ENCODE measurements at regions of chr6 and their contacts with region 1.

Region 1: DNA sequence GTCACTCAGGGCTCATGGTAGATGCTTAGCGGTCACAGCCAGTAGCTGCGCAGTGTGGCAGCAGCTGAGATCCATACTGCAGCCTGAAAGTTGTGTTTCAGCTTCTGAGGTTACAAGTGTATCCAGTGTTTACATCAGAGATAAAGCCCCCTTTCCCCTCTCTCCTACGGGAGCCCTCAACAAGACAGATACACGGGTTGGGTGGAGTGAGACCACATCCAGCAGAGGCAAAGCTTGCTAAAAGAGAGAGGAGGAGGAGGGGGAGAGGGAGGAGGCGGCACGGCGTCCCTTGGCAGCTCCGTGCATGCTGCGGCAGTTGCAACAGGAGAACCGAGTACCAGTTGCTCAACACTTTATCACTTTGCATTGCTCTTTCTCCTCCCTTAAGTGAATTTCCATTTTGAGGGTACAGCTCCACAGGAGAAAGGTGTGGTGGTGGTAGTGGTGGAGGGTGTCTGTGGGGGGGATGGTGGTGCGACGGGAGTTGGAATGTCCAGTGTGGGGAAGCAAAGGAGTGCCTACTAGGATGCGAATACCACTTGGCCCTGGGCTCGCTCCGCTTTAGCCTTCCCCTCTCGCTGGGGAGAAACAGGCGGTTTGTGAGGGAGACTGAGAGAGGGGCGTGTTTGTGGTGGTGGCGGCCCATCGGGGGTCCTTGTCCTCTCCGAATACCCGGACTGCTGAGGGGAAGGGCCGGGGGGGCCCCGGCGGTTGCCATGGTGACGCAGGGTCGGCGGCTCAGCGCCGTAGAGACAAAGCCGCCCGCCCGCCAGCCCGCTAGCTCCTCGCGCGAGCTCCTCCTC is 405 bp upstream of the RNF182 start:
- DNase-seq: peak; percentile 45
- ATAC-seq: peak; percentile 65
- H3K4me3 ChIP-seq: peak overlapping the region; percentile 76
- H3K27ac ChIP-seq: peak overlapping the region; percentile 47
- H3K4me1 ChIP-seq: peaks cover 31% of the 10 kb centered on the region
- H3K27me3 ChIP-seq: no peaks in the 10 kb centered on the region
- CTCF ChIP-seq: no peak

Region 2: GRCh38 chr6:13953061-13953705 is 28.8 kb after region 1 on chr6:
- CTCF ChIA-PET with region 1: no interaction called
- POLR2A ChIA-PET with region 1: interaction called, 5 read pairs
- intact Hi-C with region 1: loop called (anchors 2 kb)
- DNase-seq: peak; percentile 97
- ATAC-seq: peak; percentile 91
- H3K4me3 ChIP-seq: peak overlapping the region; percentile 21; the same call in 1 of the 2 replicates
- H3K27ac ChIP-seq: peak overlapping the region; percentile 77
- H3K4me1 ChIP-seq: peaks cover 34% of the 10 kb centered on the region
- H3K27me3 ChIP-seq: no peaks in the 10 kb centered on the region
- CTCF ChIP-seq: no peak

Region 3: DNA sequence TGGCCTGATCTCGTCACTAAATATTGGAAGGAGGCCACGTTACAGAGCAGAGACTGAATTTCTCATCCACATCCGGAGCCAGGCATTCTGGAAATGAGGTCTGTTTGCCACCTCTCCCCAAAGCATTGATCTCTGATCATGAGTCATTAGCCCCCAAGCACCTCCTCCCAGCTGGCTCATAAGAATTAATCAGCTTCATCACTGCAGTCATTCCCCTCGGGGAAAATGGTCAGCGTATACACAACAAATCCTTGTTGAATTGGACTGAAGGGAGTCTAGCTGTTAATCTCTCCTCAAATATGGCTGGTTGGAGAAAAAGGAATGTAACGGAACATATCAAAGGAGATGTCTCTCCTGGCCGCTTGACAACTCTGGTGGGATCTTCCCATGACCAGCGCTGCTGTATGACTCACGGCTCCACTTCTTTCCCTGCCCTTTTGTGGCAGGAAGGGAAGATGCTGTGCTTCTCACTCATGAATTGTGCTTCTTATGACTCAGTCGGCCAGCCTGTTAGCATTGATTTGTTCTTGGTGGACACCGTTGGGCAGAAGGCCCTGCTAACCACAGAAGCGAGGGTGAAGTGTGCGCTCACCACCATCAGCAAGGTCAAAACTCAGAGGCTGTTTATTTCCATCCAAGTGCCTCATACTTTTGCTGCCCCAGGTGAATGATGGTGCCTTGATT is 77.1 kb after region 1 on chr6:
- CTCF ChIA-PET with region 1: interaction called, 4 read pairs
- POLR2A ChIA-PET with region 1: interaction called, 11 read pairs
- intact Hi-C with region 1: loop called (anchors 1 kb)
- DNase-seq: peak; percentile 99
- ATAC-seq: peak; percentile 87
- H3K4me3 ChIP-seq: peak overlapping the region; percentile 51
- H3K27ac ChIP-seq: peak overlapping the region; percentile 96
- H3K4me1 ChIP-seq: peaks cover 29% of the 10 kb centered on the region
- H3K27me3 ChIP-seq: no peaks in the 10 kb centered on the region
- CTCF ChIP-seq: no peak

Region 4: GRCh38 chr6:14046476-14047068 is 122.2 kb after region 1 on chr6:
- CTCF ChIA-PET with region 1: interaction called, 18 read pairs
- POLR2A ChIA-PET with region 1: interaction called, 5 read pairs
- intact Hi-C with region 1: loop called (anchors 2 kb)
- DNase-seq: peak; percentile 87
- ATAC-seq: peak; percentile 94
- H3K4me3 ChIP-seq: no peak overlapping the region
- H3K27ac ChIP-seq: no peak overlapping the region
- H3K4me1 ChIP-seq: no peaks in the 10 kb centered on the region; the same call in 1 of the 2 replicates
- H3K27me3 ChIP-seq: no peaks in the 10 kb centered on the region
- CTCF ChIP-seq: peak; percentile 82

Region 5: GRCh38 chr6:14059791-14060444 is 135.6 kb after region 1 on chr6:
- CTCF ChIA-PET with region 1: no interaction called
- POLR2A ChIA-PET with region 1: no interaction called
- intact Hi-C with region 1: loop called (anchors 2 kb)
- DNase-seq: peak; percentile 97
- ATAC-seq: peak; percentile 53
- H3K4me3 ChIP-seq: peak overlapping the region; percentile 8; the same call in 1 of the 2 replicates
- H3K27ac ChIP-seq: peak overlapping the region; percentile 91
- H3K4me1 ChIP-seq: peaks cover 57% of the 10 kb centered on the region
- H3K27me3 ChIP-seq: no peaks in the 10 kb centered on the region
- CTCF ChIP-seq: no peak